ENCODE measurements at regions of chr17 and their contacts with region 1.

Region 1: GRCh38 chr17:21280081-21280518 is 4.4 kb upstream of the MAP2K3 start:
- DNase-seq: peak; percentile 81
- H3K27ac ChIP-seq: no peak overlapping the region
- CTCF ChIP-seq: peak; percentile 96

Region 2: DNA sequence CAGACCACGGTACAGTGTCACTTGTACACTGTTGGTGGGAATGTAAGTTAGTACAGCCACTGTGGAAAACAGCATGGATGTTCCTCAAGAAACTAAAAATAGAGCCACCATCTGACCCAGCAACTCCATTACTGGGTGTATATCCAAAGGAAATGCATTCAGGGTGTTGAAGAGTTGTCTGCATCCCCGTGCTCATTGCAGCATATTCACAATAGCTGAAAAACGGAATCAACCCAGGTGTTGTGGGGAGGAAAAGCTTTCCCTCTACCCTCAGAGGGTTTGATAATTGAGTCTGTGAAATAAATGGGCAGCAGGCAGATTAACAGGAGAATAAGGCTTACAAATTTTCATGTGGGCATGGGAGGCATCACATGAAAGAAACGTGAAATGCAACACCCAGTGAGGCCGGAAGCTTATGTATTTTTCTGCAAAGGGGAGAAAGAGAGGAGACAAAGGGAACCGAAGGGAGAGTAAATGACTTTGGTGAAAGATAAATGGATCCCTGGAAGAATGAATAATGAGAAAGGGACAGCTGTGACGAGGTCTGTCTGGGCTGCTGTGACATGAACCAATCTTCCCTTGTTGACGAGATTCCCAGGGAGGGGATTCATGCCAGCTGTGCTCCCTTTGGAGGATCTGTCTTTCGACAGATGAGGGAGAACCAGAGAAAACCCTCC is 202.2 kb after region 1 on chr17:
- CTCF ChIA-PET with region 1: interaction called, 10 read pairs
- POLR2A ChIA-PET with region 1: no interaction called
- DNase-seq: no peak
- H3K27ac ChIP-seq: no peak overlapping the region
- CTCF ChIP-seq: no peak

Measured in RWPE1 (cell line).